ENCODE measurements at regions of chr3 and their contacts with region 1.

Region 1: GRCh38 chr3:119240591-119241434 is at the start of gene B4GALT4:
- DNase-seq: peak; percentile 81
- H3K4me3 Mint-ChIP-seq: peak within 1 kb of the TSS; percentile 81
- H3K27ac Mint-ChIP-seq: peak within 1 kb of the TSS; percentile 86
- H3K4me1 Mint-ChIP-seq: peaks cover 31% of the 10 kb centered on the region
- H3K27me3 Mint-ChIP-seq: no peaks in the 10 kb centered on the region
- total RNA-seq, gene B4GALT4: 13.5 to 14.2 TPM

Region 2: DNA sequence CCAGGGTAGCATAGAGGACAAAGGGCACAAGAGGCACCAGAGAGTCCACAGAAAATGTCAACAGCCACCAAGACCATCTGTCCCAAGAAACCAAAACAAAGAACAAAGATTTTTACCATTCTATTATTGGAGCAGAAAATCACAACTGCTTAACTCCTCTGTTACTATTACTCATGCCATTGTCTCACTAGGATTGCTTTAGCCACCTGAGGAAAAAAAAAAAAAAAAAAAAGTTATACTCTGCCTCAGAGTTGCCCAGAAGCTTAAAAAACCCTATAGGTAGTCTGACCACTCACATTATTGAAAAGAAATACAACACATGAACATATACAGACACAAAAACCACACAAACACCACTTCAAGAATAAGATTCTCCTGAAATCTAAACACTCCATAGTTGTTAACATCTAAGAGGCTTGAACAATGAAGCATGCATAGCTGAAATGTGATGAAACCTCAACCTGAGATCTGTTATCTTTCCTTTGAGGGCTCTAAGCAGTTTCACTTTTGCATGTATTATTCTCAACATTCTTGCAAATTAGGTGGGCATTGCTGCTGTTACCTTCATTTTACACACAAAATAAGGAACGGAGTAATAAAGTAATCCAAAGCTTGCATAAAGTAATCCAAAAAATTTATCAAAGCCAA is 291.6 kb before region 1 on chr3:
- CTCF ChIA-PET with region 1: no interaction called
- POLR2A ChIA-PET with region 1: no interaction called
- intact Hi-C with region 1: loop called (anchors 5 kb)
- DNase-seq: no peak
- H3K4me3 Mint-ChIP-seq: no peak overlapping the region
- H3K27ac Mint-ChIP-seq: peak overlapping the region; percentile 57
- H3K4me1 Mint-ChIP-seq: peaks cover 28% of the 10 kb centered on the region
- H3K27me3 Mint-ChIP-seq: no peaks in the 10 kb centered on the region

Region 3: DNA sequence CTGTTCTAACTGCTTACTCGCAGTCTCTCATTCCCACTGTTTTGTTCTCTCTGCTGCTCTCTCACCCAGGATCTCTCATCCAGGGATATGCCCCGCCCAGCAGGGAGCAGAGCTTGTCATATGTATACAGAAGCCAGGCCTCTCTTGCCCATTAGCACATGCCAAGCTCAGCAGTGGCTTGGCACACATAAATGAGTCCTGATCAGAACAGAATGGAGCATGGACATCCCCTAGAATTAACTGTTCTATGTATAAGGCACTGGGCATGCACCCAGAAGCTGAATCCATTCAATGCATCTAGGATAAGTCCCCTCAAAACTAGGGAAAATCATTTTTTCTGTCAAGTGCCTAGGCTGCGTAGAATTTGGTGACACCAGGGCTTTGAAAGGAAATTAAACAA is 267.8 kb before region 1 on chr3:
- CTCF ChIA-PET with region 1: no interaction called
- POLR2A ChIA-PET with region 1: no interaction called
- intact Hi-C with region 1: no loop called
- DNase-seq: no peak
- H3K4me3 Mint-ChIP-seq: no peak overlapping the region
- H3K27ac Mint-ChIP-seq: no peak overlapping the region
- H3K4me1 Mint-ChIP-seq: peaks cover 3% of the 10 kb centered on the region
- H3K27me3 Mint-ChIP-seq: peaks cover 1% of the 10 kb centered on the region

Region 4: DNA sequence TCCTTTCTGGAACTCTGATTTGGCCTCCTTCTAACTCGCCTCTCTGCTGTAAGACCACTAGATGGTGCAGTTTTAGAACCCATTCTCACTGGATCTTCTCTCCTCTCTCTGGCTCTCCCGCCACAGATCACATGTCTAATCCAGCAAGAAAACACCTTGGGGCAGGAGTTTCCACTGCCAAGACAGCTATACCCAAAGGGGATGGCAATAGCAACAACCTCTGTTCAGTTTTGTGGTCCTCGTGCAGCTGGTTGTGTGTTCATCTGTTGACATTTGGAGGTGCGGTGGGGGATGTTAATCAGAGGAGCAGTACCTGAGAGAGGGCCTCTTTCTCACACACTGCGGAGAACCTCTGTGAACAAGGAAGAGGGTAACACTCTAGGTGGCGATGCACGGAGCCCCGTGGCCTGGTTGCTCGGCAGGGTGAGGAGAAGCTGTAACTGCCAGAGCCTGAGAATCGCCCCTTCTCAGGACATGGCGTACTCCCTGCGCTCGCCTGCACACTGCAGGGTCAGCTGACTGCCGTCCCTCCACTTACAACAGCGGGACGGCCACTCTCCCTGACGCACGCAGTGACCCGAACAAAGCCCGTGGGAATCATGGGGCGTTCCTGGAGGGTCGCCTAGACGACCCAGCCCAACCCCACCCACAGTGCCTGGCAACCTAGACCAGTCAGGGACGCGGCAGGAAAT is 95.2 kb before region 1 on chr3 and contains the start of gene TEX55:
- CTCF ChIA-PET with region 1: interaction called, 73 read pairs
- POLR2A ChIA-PET with region 1: no interaction called
- intact Hi-C with region 1: loop called (anchors 1 kb)
- DNase-seq: no peak
- H3K4me3 Mint-ChIP-seq: no peak within 1 kb of the TSS
- H3K27ac Mint-ChIP-seq: no peak within 1 kb of the TSS
- H3K4me1 Mint-ChIP-seq: no peaks in the 10 kb centered on the region
- H3K27me3 Mint-ChIP-seq: no peaks in the 10 kb centered on the region
- total RNA-seq, gene TEX55: not detected

Region 5: DNA sequence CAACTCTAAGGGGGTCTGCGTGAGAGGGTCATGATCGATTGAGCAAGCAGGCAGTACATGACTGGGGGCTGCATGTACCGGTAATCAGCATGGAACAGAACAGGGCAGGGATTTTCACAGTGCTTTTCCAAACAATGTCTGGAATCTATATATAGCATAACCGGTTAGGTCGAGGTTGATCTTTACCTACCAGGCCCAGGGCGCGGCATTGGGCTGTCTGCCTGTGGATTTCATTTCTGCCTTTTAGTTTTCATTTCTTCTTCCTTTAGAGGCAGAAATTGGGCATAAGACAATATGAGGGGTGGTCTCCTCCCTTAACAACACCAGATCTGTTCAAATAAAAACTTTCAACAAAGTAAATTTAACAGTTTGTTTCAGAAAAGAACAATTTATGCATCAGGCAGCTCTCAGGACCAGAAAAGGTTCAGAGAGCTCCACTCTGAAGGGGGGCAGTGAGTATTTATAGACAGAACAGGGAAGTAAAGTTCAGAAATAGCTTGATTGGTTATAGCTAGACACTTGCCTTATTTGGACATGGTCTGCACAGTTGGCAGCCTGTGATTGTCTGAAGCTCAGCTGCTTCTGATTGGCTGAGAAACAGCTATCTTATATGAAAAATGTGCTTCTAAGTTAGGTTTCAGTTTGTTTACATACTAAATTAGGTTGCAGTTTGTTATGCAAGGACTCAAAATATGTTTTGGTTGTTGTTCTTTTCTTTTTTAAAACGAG is 17.0 kb after region 1 on chr3:
- CTCF ChIA-PET with region 1: interaction called, 13 read pairs
- POLR2A ChIA-PET with region 1: no interaction called
- intact Hi-C with region 1: no loop called
- DNase-seq: no peak
- H3K4me3 Mint-ChIP-seq: no peak overlapping the region
- H3K27ac Mint-ChIP-seq: no peak overlapping the region
- H3K4me1 Mint-ChIP-seq: no peaks in the 10 kb centered on the region
- H3K27me3 Mint-ChIP-seq: no peaks in the 10 kb centered on the region

Region 6: GRCh38 chr3:119463171-119464169 is 222.7 kb after region 1 on chr3 and contains the start of gene TMEM39A:
- CTCF ChIA-PET with region 1: interaction called, 6 read pairs
- POLR2A ChIA-PET with region 1: no interaction called
- intact Hi-C with region 1: loop called (anchors 1 kb)
- DNase-seq: peak; percentile 99
- H3K4me3 Mint-ChIP-seq: peak within 1 kb of the TSS; percentile 97
- H3K27ac Mint-ChIP-seq: peak within 1 kb of the TSS; percentile 98
- H3K4me1 Mint-ChIP-seq: peaks cover 41% of the 10 kb centered on the region
- H3K27me3 Mint-ChIP-seq: no peaks in the 10 kb centered on the region
- total RNA-seq, gene TMEM39A: 33.9 to 34.3 TPM

Region 7: DNA sequence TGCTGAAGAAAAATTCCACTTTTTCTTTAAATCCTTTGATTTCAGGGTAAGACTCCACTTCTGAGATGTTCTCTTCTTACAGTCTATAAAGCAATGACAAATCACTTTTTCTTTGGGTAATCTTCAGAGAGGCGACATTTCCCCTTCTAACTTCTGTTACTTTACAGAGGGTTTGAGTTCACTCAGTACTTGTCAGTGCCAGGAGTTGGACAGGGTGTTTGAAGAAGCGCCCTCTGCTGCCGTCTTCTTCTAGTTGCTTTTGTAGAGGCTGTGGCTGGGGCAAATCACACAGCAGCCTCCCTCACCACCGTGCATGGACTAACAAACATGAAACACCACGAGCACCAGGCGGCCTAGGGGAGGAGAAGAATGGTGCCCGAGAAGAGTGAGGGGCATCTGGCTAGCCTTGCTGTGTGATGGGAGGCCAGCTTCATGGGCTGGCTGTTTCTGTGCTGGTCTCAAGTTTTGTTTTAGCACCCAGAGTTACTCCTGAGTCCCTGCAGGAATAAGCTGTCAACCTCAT is 318.7 kb after region 1 on chr3 and contains the start of gene CD80:
- CTCF ChIA-PET with region 1: no interaction called
- POLR2A ChIA-PET with region 1: no interaction called
- intact Hi-C with region 1: no loop called
- DNase-seq: peak; percentile 84
- H3K4me3 Mint-ChIP-seq: peak within 1 kb of the TSS; percentile 24
- H3K27ac Mint-ChIP-seq: peak within 1 kb of the TSS; percentile 56
- H3K4me1 Mint-ChIP-seq: peaks cover 24% of the 10 kb centered on the region
- H3K27me3 Mint-ChIP-seq: no peaks in the 10 kb centered on the region
- total RNA-seq, gene CD80: 3.4 to 3.7 TPM

Region 8: GRCh38 chr3:119702530-119703157 is 461.8 kb after region 1 on chr3 and contains the start of gene CFAP91:
- CTCF ChIA-PET with region 1: interaction called, 6 read pairs
- POLR2A ChIA-PET with region 1: no interaction called
- intact Hi-C with region 1: loop called (anchors 5 kb)
- DNase-seq: peak; percentile 92
- H3K4me3 Mint-ChIP-seq: peak within 1 kb of the TSS; percentile 74
- H3K27ac Mint-ChIP-seq: no peak within 1 kb of the TSS
- H3K4me1 Mint-ChIP-seq: peaks cover 43% of the 10 kb centered on the region
- H3K27me3 Mint-ChIP-seq: no peaks in the 10 kb centered on the region
- total RNA-seq, gene CFAP91: 0.29 to 0.31 TPM

Measured in activated CD4-positive, alpha-beta memory T cell treated with anti-CD3 and anti-CD28 coated beads for 36 hours (primary cell).